ENCODE measurements at regions of chr6 and their contacts with region 1.

Region 1: GRCh38 chr6:138115877-138116660 is 8.8 kb upstream of the PERP start:
- DNase-seq: peak; percentile 44
- H3K4me3 ChIP-seq: no peak overlapping the region
- H3K27ac ChIP-seq: no peak overlapping the region
- H3K4me1 ChIP-seq: no peaks in the 10 kb centered on the region
- H3K27me3 ChIP-seq: no peaks in the 10 kb centered on the region
- CTCF ChIP-seq: peak; percentile 54 to 65

Region 2: DNA sequence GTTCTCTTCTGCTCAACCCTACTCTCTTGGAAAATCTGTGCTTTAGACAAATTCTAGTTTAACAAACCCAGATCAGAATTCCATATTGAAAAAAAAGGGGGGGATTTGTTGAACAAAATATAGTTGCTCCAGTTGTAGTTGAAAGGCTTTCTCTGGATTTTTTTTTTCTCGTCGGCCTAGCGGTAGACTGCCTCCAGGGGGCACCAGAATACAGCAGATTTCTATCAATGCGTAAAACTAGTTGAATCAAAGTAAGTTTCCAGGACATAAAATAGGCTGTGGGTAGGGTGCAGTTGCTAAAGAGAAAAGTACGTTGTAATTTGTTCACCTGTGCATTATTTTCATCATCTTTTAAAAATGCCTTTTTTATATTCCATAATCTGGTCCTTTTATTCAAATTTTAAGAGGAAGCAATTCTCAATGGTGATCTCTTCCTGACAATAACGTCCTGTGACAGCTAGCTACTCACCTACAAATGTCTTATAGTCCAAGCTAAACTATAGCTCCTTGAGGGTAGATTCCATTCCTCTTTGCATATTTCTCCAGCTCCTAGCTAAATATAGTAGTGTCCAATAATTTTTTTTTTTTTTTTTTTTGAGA is 114.2 kb before region 1 on chr6:
- CTCF ChIA-PET with region 1: no interaction called
- dilution Hi-C with region 1: no loop called
- in situ Hi-C with region 1: loop called in 1 of 2 experiments (anchors 5 kb)
- intact Hi-C with region 1: no loop called
- DNase-seq: peak; percentile 43
- H3K4me3 ChIP-seq: no peak overlapping the region
- H3K27ac ChIP-seq: no peak overlapping the region
- H3K4me1 ChIP-seq: peaks cover 11% of the 10 kb centered on the region
- H3K27me3 ChIP-seq: no peaks in the 10 kb centered on the region
- CTCF ChIP-seq: peak; percentile 91

Region 3: DNA sequence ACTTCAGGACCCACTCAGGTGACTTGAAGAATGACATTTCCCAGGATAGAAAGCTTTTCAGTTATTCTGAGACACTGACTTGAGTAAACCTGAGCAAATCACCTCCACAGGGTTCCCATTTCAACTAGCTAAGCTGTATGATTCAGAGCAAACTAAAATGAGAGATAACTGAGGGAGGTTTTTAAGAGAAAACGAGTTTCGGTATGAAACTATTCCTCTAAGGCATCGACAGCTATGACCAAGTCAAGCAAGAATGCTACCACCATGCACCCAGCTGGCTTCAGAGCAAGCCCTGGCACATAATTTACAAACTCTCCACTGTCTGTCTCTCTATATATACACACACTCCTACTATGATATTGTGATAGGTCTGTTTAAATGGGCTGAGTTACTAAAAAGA is 84.2 kb before region 1 on chr6:
- CTCF ChIA-PET with region 1: no interaction called
- dilution Hi-C with region 1: no loop called
- in situ Hi-C with region 1: no loop called
- intact Hi-C with region 1: no loop called
- DNase-seq: peak; percentile 95
- H3K4me3 ChIP-seq: no peak overlapping the region
- H3K27ac ChIP-seq: peak overlapping the region; percentile 100
- H3K4me1 ChIP-seq: peaks cover 73% of the 10 kb centered on the region
- H3K27me3 ChIP-seq: no peaks in the 10 kb centered on the region
- CTCF ChIP-seq: no peak

Region 4: DNA sequence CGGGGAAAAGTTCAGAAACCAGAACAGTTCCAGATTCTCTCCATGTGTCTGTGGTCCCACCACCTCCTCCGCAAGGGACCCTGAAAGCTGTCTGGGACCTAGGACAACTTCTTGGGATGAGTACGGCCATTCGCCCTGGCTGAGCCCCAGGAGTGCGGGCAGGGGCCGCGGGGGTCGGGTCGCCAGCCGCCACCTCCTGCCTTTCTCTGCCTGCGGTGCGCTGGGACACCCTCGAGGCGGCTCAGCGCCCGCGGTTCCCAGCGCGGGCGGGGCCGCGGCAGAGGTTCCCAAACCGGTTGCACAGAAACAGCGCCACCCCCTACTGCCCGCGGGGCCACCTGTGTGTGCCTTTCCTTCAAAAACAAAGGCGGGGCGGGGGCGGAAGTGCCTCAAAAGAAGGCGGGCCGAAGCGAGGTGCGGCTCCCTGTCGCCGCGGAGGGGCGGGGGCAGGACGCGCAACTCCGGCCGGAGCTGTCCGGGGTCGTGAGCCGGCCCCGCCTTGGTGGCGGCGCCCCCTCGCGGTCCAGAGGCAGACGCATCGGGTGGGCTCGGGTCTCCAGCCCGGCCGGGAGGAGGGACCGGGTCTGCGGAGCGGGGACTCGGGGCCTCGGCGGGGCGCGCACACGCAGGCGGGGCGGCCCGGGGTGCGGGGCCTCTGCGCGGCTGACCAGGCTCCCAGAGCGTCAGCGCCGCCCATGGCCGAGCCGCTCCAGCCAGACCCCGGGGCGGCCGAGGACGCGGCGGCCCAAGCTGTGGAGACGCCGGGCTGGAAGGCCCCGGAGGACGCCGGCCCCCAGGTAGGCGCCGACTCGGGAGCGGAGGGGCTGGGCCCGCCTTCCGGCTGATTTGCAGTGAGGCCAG is 288.0 kb after region 1 on chr6 and contains the start of gene HEBP2:
- CTCF ChIA-PET with region 1: interaction called, 3 read pairs
- dilution Hi-C with region 1: no loop called
- in situ Hi-C with region 1: loop called in 1 of 2 experiments (anchors 10 kb)
- intact Hi-C with region 1: loop called (anchors 1 kb)
- DNase-seq: peak; percentile 95
- H3K4me3 ChIP-seq: peak within 1 kb of the TSS; percentile 84 to 98 (median 88)
- H3K27ac ChIP-seq: peak within 1 kb of the TSS; percentile 98
- H3K4me1 ChIP-seq: peaks cover 21% of the 10 kb centered on the region
- H3K27me3 ChIP-seq: no peaks in the 10 kb centered on the region
- CTCF ChIP-seq: peak in 1 of 2 donors; percentile 40
- total RNA-seq, gene HEBP2: 63.8 to 99.1 TPM

Region 5: GRCh38 chr6:138509371-138509770 is 393.3 kb after region 1 on chr6:
- CTCF ChIA-PET with region 1: no interaction called
- dilution Hi-C with region 1: no loop called
- in situ Hi-C with region 1: loop called in 1 of 2 experiments (anchors 10 kb)
- intact Hi-C with region 1: loop called (anchors 1 kb)
- DNase-seq: peak; percentile 47
- H3K4me3 ChIP-seq: no peak overlapping the region
- H3K27ac ChIP-seq: no peak overlapping the region
- H3K4me1 ChIP-seq: no peaks in the 10 kb centered on the region
- H3K27me3 ChIP-seq: no peaks in the 10 kb centered on the region
- CTCF ChIP-seq: peak; percentile 64 to 68

Region 6: DNA sequence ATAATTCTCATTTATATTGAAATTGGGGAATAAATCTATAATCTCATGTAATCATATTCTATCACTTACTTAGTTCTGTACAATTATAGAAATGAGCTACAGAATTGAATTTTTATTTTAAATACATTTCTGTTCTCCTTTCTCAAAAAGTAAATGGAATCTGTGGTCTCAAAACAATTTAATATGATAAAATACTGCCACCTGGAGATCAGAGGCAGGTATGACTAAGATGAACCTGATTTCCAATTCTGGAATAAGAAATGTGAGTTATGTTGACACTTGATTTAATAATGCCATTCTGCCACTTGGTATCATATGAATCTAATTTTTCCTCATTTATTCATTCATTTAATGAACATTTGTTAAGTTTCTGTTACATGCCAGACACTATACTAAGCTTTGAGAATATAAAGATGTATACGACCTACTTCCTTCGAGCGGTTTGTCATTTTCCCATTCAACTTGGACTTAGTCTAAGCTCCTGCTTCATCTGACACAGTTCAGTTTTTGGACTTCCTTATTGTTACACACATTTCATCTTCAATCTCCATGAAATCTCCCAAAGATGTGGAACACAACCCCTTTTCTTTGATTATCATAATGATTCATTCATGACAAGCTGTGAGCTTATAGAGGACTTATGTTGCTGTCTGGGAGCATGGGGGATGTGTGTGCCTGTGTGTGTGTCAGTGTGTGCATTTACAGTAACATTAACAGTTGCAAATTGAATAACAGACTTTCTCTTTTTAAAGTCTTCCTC is 650.0 kb after region 1 on chr6:
- CTCF ChIA-PET with region 1: no interaction called
- dilution Hi-C with region 1: no loop called
- in situ Hi-C with region 1: loop called (anchors 25 kb)
- intact Hi-C with region 1: loop called (anchors 1 kb)
- DNase-seq: peak; percentile 20
- H3K4me3 ChIP-seq: no peak overlapping the region
- H3K27ac ChIP-seq: no peak overlapping the region
- H3K4me1 ChIP-seq: no peaks in the 10 kb centered on the region
- H3K27me3 ChIP-seq: no peaks in the 10 kb centered on the region
- CTCF ChIP-seq: peak; percentile 54 to 64

Measured in mammary epithelial cell (primary cell).